ENCODE measurements at regions of chr2 and their contacts with region 1.

Region 1: DNA sequence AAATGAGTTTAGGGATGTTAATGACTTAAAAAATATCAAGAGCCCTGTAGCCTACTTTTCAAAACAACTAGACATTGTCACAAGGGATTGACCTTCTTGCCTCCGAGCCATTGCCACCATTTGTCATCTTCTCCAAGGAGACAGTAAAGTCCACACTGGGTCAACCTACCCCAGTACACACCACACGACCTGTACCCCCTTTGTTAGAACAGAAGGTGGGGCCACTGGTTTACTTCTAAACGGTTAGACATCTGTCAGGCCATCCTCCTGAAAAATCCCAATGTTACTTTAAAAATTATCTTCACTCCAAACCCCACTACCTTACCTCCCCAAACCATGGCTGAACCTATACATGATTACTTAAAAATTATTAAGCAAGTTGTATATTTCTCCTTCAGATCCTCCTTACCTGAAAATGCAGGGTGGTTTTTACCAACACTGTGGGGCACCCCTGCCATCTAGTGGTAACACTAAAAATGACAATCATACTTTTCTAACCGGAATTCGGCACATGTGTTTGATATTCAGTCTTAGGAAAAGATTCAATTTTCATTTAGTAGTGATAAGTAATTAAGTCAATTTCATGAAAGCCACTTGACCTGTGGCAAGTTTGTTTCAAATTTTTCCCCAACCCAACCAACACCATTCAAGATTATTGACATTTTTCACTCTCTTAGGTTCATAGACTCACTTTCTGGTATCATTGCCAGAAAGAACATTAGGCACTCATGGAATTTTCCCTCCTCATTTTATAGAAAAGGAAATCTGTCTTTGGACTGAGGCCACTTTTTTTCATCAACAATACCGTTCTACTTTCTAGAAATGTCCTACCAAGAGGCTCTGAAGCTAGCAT is 265.3 kb upstream of the PKDCC start:
- DNase-seq: peak; percentile 41
- ATAC-seq: peak; percentile 72
- H3K4me3 ChIP-seq: no peak overlapping the region
- H3K27ac ChIP-seq: no peak overlapping the region
- H3K4me1 ChIP-seq: no peaks in the 10 kb centered on the region
- H3K27me3 ChIP-seq: no peaks in the 10 kb centered on the region; a peak in 2 of 5 replicates
- CTCF ChIP-seq: peak; percentile 88
- EP300 ChIP-seq: no peak
- POLR2A ChIP-seq: no peak
- RAD21 ChIP-seq: peak; percentile 74

Region 2: DNA sequence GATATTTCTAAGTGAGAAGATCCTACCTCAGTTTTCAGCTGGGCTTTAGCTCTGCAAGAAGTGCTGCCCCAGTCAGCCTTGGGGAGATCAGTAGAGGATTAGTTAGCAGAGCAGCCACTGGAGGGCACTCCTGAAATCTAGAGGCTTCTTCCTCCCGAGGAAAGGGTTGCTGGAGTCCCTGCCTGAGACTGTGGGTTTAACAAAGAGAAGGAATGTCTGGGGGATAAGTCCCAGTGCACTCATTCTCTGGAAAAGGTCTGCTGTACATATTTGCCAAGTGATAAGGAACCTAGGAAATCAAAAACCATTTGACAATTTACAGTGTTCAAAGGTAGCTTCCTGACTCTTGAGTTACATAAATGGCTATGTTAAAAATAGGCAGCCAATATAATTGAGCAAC is 1537.9 kb before region 1 on chr2:
- CTCF ChIA-PET with region 1: no interaction called
- POLR2A ChIA-PET with region 1: no interaction called
- in situ Hi-C with region 1: no loop called
- intact Hi-C with region 1: loop called (anchors 5 kb)
- DNase-seq: peak; percentile 37
- ATAC-seq: peak; percentile 98
- H3K4me3 ChIP-seq: no peak overlapping the region
- H3K27ac ChIP-seq: no peak overlapping the region
- H3K4me1 ChIP-seq: no peaks in the 10 kb centered on the region
- H3K27me3 ChIP-seq: no peaks in the 10 kb centered on the region
- CTCF ChIP-seq: peak; percentile 65
- EP300 ChIP-seq: no peak
- POLR2A ChIP-seq: no peak
- RAD21 ChIP-seq: no peak

Region 3: GRCh38 chr2:40760071-40760666 is 1022.4 kb before region 1 on chr2:
- CTCF ChIA-PET with region 1: no interaction called
- POLR2A ChIA-PET with region 1: no interaction called
- in situ Hi-C with region 1: no loop called
- intact Hi-C with region 1: loop called (anchors 1 kb)
- DNase-seq: peak; percentile 35
- ATAC-seq: peak; percentile 99
- H3K4me3 ChIP-seq: no peak overlapping the region
- H3K27ac ChIP-seq: no peak overlapping the region
- H3K4me1 ChIP-seq: no peaks in the 10 kb centered on the region
- H3K27me3 ChIP-seq: no peaks in the 10 kb centered on the region
- CTCF ChIP-seq: peak; percentile 77
- EP300 ChIP-seq: no peak
- POLR2A ChIP-seq: no peak
- RAD21 ChIP-seq: peak; percentile 68

Region 4: GRCh38 chr2:41414486-41415230 is 367.9 kb before region 1 on chr2:
- CTCF ChIA-PET with region 1: interaction called, 13 read pairs
- POLR2A ChIA-PET with region 1: no interaction called
- in situ Hi-C with region 1: loop called (anchors 5 kb)
- intact Hi-C with region 1: loop called (anchors 1 kb)
- DNase-seq: peak; percentile 56
- ATAC-seq: peak; percentile 98
- H3K4me3 ChIP-seq: no peak overlapping the region
- H3K27ac ChIP-seq: no peak overlapping the region
- H3K4me1 ChIP-seq: no peaks in the 10 kb centered on the region
- H3K27me3 ChIP-seq: no peaks in the 10 kb centered on the region
- CTCF ChIP-seq: peak; percentile 78
- EP300 ChIP-seq: no peak
- POLR2A ChIP-seq: no peak
- RAD21 ChIP-seq: peak; percentile 50; the same call in 1 of the 2 replicates

Measured in HepG2 (cell line).